ENCODE measurements at regions of chr6 and their contacts with region 1.

Region 1: GRCh38 chr6:29737707-29738630 is 14.7 kb downstream of the HLA-F start:
- DNase-seq: peak in 1 of 2 experiments; percentile 68
- ATAC-seq: peak; percentile 95 to 96
- H3K4me3 ChIP-seq: no peak overlapping the region
- H3K27ac ChIP-seq: no peak overlapping the region
- H3K4me1 ChIP-seq: no peaks in the 10 kb centered on the region
- CTCF ChIP-seq: peak; percentile 62
- EP300 ChIP-seq: no peak
- POLR2A ChIP-seq: no peak
- RAD21 ChIP-seq: peak; percentile 78 to 86

Region 2: GRCh38 chr6:29748391-29749307 is 10.7 kb after region 1 on chr6:
- CTCF ChIA-PET with region 1: interaction called, 22 read pairs
- POLR2A ChIA-PET with region 1: no interaction called
- DNase-seq: peak; percentile 73 to 94
- ATAC-seq: peak; percentile 71 to 90
- H3K4me3 ChIP-seq: peak overlapping the region; percentile 79
- H3K27ac ChIP-seq: peak overlapping the region; percentile 55 to 75; a peak in 5 of 6 replicates
- H3K4me1 ChIP-seq: no peaks in the 10 kb centered on the region
- CTCF ChIP-seq: no peak
- EP300 ChIP-seq: no peak
- POLR2A ChIP-seq: peak; percentile 49
- RAD21 ChIP-seq: no peak

Region 3: GRCh38 chr6:29926413-29927274 is 188.7 kb after region 1 on chr6:
- CTCF ChIA-PET with region 1: no interaction called
- POLR2A ChIA-PET with region 1: no interaction called
- DNase-seq: peak; percentile 9 to 18
- ATAC-seq: peak; percentile 67 to 87
- H3K4me3 ChIP-seq: peak overlapping the region; percentile 38
- H3K27ac ChIP-seq: peak overlapping the region in 1 of 2 experiments; percentile 72; a peak in 3 of 6 replicates
- H3K4me1 ChIP-seq: no peaks in the 10 kb centered on the region
- CTCF ChIP-seq: no peak
- EP300 ChIP-seq: no peak
- POLR2A ChIP-seq: no peak
- RAD21 ChIP-seq: no peak

Measured in A549 (cell line).